ENCODE measurements at regions of chr5 and their contacts with region 1.

Region 1: DNA sequence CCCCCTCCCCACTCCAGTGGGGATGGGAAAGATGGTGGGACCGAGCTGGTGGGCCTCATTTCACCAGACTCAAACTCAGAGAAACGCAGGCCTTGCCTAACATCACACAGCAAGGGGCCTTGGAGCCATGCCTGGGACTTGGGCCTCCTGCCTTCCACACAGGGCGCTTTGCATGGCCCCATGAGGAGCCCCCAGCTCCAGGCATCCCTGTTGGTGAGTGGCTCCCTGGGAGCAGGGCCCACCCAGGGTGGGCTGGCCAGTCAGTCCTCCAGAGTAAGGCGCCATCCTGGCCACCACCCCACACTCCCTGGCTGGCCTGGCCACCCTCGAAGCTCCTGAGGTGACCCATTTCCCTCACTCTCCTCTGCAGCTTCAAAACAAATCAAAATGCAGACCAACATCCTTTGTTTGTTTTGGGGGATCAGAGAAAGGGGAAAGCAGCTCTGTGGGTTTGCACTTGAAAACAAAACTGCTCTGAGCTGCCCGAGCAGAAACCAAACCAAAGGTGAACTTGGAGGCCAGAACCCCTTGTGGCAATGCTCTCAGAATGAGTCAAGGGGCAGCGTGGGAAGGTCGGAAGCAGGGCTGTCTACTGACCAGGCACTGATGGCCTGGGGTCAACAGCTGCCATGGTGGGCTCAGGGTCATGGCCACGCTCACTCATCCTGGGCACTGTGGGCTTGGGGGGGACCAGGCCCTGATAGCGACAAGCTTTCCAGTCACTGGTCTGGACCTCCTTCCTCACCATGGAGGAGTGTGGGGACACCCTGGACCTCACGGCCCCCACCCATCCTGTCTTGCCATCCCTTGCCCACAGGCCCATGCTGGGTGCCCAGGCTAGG is 37.0 kb upstream of the VDAC1 start:
- DNase-seq: no peak
- H3K4me3 Mint-ChIP-seq: no peak overlapping the region
- H3K27ac Mint-ChIP-seq: no peak overlapping the region
- H3K4me1 Mint-ChIP-seq: peaks cover 5% of the 10 kb centered on the region
- H3K27me3 Mint-ChIP-seq: peaks cover 11% of the 10 kb centered on the region

Region 2: GRCh38 chr5:133930061-133930812 is 111.6 kb before region 1 on chr5:
- CTCF ChIA-PET with region 1: no interaction called
- POLR2A ChIA-PET with region 1: no interaction called
- DNase-seq: peak; percentile 61
- H3K4me3 Mint-ChIP-seq: peak overlapping the region; percentile 43
- H3K27ac Mint-ChIP-seq: peak overlapping the region; percentile 60
- H3K4me1 Mint-ChIP-seq: peaks cover 24% of the 10 kb centered on the region
- H3K27me3 Mint-ChIP-seq: no peaks in the 10 kb centered on the region

Region 3: GRCh38 chr5:134018154-134018985 is 23.4 kb before region 1 on chr5:
- CTCF ChIA-PET with region 1: interaction called, 12 read pairs
- POLR2A ChIA-PET with region 1: no interaction called
- DNase-seq: no peak
- H3K4me3 Mint-ChIP-seq: no peak overlapping the region
- H3K27ac Mint-ChIP-seq: no peak overlapping the region
- H3K4me1 Mint-ChIP-seq: no peaks in the 10 kb centered on the region
- H3K27me3 Mint-ChIP-seq: peaks cover 9% of the 10 kb centered on the region

Region 4: DNA sequence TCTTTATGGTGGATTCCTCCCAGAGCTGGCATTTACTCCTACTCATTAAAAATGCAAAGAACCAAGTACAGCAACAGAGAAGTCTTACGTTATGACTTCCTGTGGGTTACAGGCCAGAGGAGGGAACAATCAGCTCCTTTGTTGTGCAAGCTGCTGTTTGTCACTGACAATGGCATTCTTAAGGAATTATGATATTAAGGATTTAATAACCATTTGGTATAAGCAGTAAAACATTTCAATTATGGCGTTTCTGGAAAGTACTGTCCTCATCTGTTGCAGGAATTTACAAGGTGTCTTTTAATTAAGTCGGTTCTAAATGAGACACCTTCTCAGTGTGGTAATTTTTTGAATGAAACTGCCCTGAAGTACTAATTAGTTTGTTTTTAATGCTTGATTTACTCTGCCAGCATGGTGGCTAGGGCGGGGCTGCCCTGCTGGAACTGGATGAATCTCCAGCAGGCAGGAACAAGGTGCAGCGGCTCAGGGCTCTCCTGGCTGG is 12.1 kb after region 1 on chr5:
- CTCF ChIA-PET with region 1: interaction called, 15 read pairs
- POLR2A ChIA-PET with region 1: no interaction called
- DNase-seq: no peak
- H3K4me3 Mint-ChIP-seq: no peak overlapping the region
- H3K27ac Mint-ChIP-seq: no peak overlapping the region
- H3K4me1 Mint-ChIP-seq: peaks cover 10% of the 10 kb centered on the region
- H3K27me3 Mint-ChIP-seq: no peaks in the 10 kb centered on the region

Region 5: GRCh38 chr5:134113902-134114875 is 72.4 kb after region 1 on chr5 and contains the start of gene TCF7:
- CTCF ChIA-PET with region 1: interaction called, 16 read pairs
- POLR2A ChIA-PET with region 1: interaction called, 3 read pairs
- DNase-seq: peak; percentile 76
- H3K4me3 Mint-ChIP-seq: peak within 1 kb of the TSS; percentile 78
- H3K27ac Mint-ChIP-seq: no peak within 1 kb of the TSS
- H3K4me1 Mint-ChIP-seq: peaks cover 57% of the 10 kb centered on the region
- H3K27me3 Mint-ChIP-seq: peaks cover 67% of the 10 kb centered on the region
- total RNA-seq, gene TCF7: 19.2 to 21.9 TPM

Region 6: DNA sequence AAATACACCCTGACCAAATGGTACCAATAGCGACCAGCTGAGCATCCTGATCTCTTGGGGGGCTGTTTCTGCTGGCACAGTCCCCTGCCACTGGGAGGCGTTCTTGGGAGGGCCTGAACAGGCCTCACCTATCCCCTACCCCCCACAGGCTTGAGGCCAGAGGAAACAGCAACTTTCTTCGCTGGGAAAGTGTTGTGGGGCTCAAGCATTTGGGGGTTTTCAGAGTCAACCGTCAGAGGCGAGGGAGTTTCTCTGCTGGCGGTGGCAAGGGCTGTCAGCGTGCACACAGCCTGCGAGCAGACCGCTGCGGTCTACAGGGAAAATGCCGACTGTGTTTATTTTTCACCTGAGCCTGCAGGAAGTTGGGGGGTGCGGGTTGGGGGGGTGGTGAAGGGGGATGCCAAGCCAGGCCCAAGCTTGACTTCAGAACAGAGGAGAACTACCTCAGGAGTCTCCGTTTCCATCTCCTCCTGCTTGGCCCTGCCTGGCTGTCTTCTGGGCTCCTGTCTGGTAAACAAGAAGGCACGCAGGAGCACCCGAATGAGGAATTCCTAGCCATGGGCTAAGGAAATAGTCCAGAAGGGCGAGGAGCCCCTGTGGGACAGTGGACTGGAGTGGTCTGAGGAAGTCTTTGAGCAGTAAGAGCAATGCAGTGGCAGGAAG is 90.7 kb after region 1 on chr5:
- CTCF ChIA-PET with region 1: interaction called, 348 read pairs
- POLR2A ChIA-PET with region 1: no interaction called
- DNase-seq: peak; percentile 68
- H3K4me3 Mint-ChIP-seq: no peak overlapping the region
- H3K27ac Mint-ChIP-seq: peak overlapping the region; percentile 78
- H3K4me1 Mint-ChIP-seq: peaks cover 77% of the 10 kb centered on the region
- H3K27me3 Mint-ChIP-seq: peaks cover 39% of the 10 kb centered on the region

Region 7: DNA sequence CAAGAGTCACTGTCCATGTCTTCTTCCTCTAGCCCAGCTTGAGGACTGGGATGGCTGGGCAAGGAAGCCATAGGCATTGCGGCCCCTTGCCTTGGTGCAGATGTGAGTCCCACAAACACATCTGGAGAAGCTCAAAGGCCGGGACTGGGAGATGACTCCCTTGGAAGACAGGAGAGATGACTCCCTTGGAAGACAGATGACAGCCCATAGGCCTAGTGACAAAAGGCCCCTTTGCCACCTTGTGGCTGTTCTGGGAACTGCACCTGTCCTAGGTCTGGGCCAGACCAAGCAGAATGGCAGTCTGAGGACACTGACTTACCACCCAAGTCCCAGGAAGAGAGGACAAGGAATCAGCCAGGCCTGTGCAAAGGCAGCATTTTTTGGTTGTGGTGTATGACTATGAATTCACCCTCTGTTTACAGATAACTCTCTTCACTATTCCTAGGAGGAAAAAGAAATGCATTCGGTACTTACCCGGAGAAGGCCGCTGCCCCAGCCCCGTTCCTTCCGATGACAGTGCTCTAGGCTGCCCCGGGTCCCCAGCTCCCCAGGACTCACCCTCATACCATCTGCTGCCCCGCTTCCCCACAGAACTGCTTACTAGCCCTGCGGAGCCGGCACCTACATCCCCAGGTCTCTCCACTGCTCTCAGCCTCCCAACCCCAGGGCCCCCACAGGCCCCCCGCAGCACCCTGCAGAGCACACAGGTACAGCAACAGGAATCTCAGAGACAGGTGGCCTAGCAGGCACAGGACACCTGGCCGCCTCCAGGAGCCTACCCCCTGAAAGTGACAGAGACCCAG is 104.2 kb after region 1 on chr5:
- CTCF ChIA-PET with region 1: interaction called, 348 read pairs
- POLR2A ChIA-PET with region 1: interaction called, 5 read pairs
- DNase-seq: peak; percentile 83
- H3K4me3 Mint-ChIP-seq: no peak overlapping the region
- H3K27ac Mint-ChIP-seq: no peak overlapping the region
- H3K4me1 Mint-ChIP-seq: peaks cover 5% of the 10 kb centered on the region
- H3K27me3 Mint-ChIP-seq: no peaks in the 10 kb centered on the region

Measured in activated CD4-positive, alpha-beta memory T cell treated with anti-CD3 and anti-CD28 coated beads, Interleukin-2, amount 10 ng/mL, durations not matched to agents 7 days and 5 days (primary cell).